ENCODE measurements at regions of chr5 and their contacts with region 1.

Region 1: GRCh38 chr5:154740483-154740882 is 14.7 kb upstream of the LARP1 start:
- DNase-seq: no peak
- ATAC-seq: no peak
- H3K4me3 ChIP-seq: no peak overlapping the region
- H3K4me3 Mint-ChIP-seq: no peak overlapping the region
- H3K27ac ChIP-seq: no peak overlapping the region
- H3K27ac Mint-ChIP-seq: no peak overlapping the region
- H3K4me1 ChIP-seq: no peaks in the 10 kb centered on the region
- H3K4me1 Mint-ChIP-seq: no peaks in the 10 kb centered on the region
- H3K27me3 ChIP-seq: no peaks in the 10 kb centered on the region
- H3K27me3 Mint-ChIP-seq: peaks cover 0 to 2% of the 10 kb centered on the region in 2 donors

Region 2: DNA sequence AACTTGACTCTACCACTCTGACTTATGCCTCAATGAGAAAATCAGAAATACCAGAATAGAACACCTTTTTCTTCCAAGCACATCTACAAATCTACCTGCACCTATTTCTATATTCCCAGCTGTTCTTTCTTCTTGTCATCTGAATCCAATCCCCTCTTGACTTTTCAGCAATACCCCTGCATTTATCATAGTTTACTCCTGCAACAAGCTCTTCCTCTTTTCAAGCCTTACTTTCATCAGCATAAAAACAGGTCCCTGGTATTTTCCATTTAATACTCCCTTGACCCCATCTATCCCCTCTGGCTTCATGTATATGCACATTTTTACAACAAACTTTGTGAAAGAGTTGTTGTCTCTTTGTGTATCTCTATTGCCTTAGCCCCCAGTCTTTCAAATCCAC is 194.4 kb after region 1 on chr5:
- CTCF ChIA-PET with region 1: no interaction called
- POLR2A ChIA-PET with region 1: interaction called in 1 of 2 experiments, 11 read pairs
- DNase-seq: no peak
- ATAC-seq: no peak
- H3K4me3 ChIP-seq: no peak overlapping the region
- H3K4me3 Mint-ChIP-seq: no peak overlapping the region
- H3K27ac ChIP-seq: no peak overlapping the region
- H3K27ac Mint-ChIP-seq: no peak overlapping the region
- H3K4me1 ChIP-seq: peaks cover 8 to 17% of the 10 kb centered on the region in 2 experiments
- H3K4me1 Mint-ChIP-seq: peaks cover 24 to 48% (median 39%) of the 10 kb centered on the region in 3 donors
- H3K27me3 ChIP-seq: no peaks in the 10 kb centered on the region
- H3K27me3 Mint-ChIP-seq: no peaks in the 10 kb centered on the region